ENCODE measurements at regions of chr14 and their contacts with region 1.

Region 1: DNA sequence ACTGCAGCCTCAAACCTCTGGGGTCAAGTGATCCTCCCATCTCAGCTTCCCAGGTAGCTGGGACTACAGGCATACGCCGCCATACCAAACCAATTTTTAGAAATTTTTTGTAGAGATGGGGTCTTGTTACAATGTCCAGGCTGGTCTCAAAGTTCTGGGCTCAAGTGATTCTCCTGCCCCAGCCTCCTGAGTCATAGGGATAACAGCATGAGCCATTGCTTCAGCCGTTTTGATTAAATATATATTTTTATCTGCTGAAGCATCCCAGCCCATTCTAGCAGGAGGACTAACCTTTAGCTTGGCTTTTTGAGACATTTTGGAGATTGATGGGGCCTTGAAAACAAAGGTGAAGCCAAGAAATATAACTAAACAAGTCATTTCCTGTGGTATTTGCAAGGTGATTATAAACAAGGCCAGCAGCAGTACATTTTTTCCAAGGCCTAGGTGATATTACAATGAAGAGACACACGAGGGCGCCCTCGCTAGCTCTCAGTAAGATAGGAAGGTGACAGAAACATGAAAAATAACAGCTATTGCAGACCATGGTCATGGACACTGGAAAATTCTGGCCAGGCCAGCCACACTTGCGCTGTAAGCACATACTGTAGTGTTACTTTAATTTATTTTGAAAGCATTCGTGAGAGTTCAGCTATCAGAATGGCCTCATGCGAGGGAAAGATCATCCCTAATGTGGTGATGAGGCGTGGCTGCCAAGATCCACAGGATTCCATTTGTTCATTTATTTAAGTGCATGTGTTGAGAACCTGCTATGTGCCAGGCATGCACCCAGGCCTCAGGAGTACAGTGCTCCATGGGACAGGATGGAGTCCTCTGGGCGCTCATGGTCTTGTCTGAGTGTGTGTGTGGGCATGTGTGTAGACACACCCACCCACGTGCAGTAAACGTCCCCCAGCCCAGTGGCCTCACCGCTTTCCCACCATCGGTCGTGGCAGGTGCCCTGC is 63.5 kb downstream of the DGLUCY start:
- DNase-seq: peak; percentile 80
- H3K4me3 Mint-ChIP-seq: no peak overlapping the region
- H3K27ac Mint-ChIP-seq: no peak overlapping the region
- H3K4me1 Mint-ChIP-seq: no peaks in the 10 kb centered on the region
- H3K27me3 Mint-ChIP-seq: no peaks in the 10 kb centered on the region
- CTCF ChIP-seq: peak; percentile 86

Region 2: GRCh38 chr14:90912671-90913070 is 264.7 kb before region 1 on chr14:
- CTCF ChIA-PET with region 1: interaction called, 31 read pairs
- POLR2A ChIA-PET with region 1: no interaction called
- intact Hi-C with region 1: no loop called
- DNase-seq: no peak
- H3K4me3 Mint-ChIP-seq: no peak overlapping the region
- H3K27ac Mint-ChIP-seq: no peak overlapping the region
- H3K4me1 Mint-ChIP-seq: peaks cover 6% of the 10 kb centered on the region
- H3K27me3 Mint-ChIP-seq: no peaks in the 10 kb centered on the region
- CTCF ChIP-seq: no peak

Region 3: GRCh38 chr14:91060351-91061055 is 116.9 kb before region 1 on chr14 and contains the start of gene RPS6KA5:
- CTCF ChIA-PET with region 1: interaction called, 27 read pairs
- POLR2A ChIA-PET with region 1: interaction called, 10 read pairs
- intact Hi-C with region 1: loop called (anchors 1 kb)
- DNase-seq: peak; percentile 100
- H3K4me3 Mint-ChIP-seq: no peak within 1 kb of the TSS
- H3K27ac Mint-ChIP-seq: no peak within 1 kb of the TSS
- H3K4me1 Mint-ChIP-seq: peaks cover 10% of the 10 kb centered on the region
- H3K27me3 Mint-ChIP-seq: no peaks in the 10 kb centered on the region
- CTCF ChIP-seq: no peak
- total RNA-seq, gene RPS6KA5: 1.3 and 2.2 TPM in 2 replicates

Region 4: DNA sequence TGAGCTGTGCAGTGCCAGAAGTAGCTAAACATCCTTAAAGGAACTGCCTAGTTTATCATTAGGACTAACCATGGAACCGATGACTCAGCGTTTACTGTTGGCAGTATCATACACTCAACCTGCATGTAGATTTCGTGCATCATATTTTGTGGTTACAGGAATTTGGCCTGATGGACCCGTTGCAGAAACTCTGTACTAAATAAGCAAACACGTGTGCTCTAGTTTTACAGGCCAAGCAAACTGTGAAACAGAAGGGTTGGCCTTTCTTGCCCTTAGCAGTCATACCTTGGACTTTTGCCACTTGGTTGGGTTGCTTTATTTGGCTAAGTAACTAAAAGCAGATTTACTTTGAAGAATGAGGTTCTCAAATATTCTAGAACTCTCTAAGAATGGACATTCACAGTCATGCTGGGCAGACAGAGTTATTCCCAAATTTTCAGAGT is 27.9 kb before region 1 on chr14:
- CTCF ChIA-PET with region 1: interaction called, 11 read pairs
- POLR2A ChIA-PET with region 1: no interaction called
- intact Hi-C with region 1: no loop called
- DNase-seq: peak; percentile 98
- H3K4me3 Mint-ChIP-seq: no peak overlapping the region
- H3K27ac Mint-ChIP-seq: no peak overlapping the region
- H3K4me1 Mint-ChIP-seq: peaks cover 16% of the 10 kb centered on the region
- H3K27me3 Mint-ChIP-seq: no peaks in the 10 kb centered on the region
- CTCF ChIP-seq: no peak

Region 5: GRCh38 chr14:91164685-91165084 is 12.7 kb before region 1 on chr14:
- CTCF ChIA-PET with region 1: interaction called, 29 read pairs
- POLR2A ChIA-PET with region 1: interaction called, 4 read pairs
- intact Hi-C with region 1: no loop called
- DNase-seq: peak; percentile 70
- H3K4me3 Mint-ChIP-seq: no peak overlapping the region
- H3K27ac Mint-ChIP-seq: peak overlapping the region; percentile 64
- H3K4me1 Mint-ChIP-seq: peaks cover 12% of the 10 kb centered on the region
- H3K27me3 Mint-ChIP-seq: no peaks in the 10 kb centered on the region
- CTCF ChIP-seq: no peak

Region 6: GRCh38 chr14:91237219-91237618 is 59.9 kb after region 1 on chr14:
- CTCF ChIA-PET with region 1: no interaction called
- POLR2A ChIA-PET with region 1: no interaction called
- intact Hi-C with region 1: no loop called
- DNase-seq: no peak
- H3K4me3 Mint-ChIP-seq: no peak overlapping the region
- H3K27ac Mint-ChIP-seq: no peak overlapping the region
- H3K4me1 Mint-ChIP-seq: no peaks in the 10 kb centered on the region
- H3K27me3 Mint-ChIP-seq: no peaks in the 10 kb centered on the region
- CTCF ChIP-seq: no peak

Region 7: GRCh38 chr14:91281346-91281745 is 104.0 kb after region 1 on chr14:
- CTCF ChIA-PET with region 1: interaction called, 195 read pairs
- POLR2A ChIA-PET with region 1: interaction called, 3 read pairs
- intact Hi-C with region 1: loop called (anchors 1 kb)
- DNase-seq: peak; percentile 66
- H3K4me3 Mint-ChIP-seq: no peak overlapping the region
- H3K27ac Mint-ChIP-seq: no peak overlapping the region
- H3K4me1 Mint-ChIP-seq: peaks cover 26% of the 10 kb centered on the region
- H3K27me3 Mint-ChIP-seq: no peaks in the 10 kb centered on the region
- CTCF ChIP-seq: no peak

Region 8: DNA sequence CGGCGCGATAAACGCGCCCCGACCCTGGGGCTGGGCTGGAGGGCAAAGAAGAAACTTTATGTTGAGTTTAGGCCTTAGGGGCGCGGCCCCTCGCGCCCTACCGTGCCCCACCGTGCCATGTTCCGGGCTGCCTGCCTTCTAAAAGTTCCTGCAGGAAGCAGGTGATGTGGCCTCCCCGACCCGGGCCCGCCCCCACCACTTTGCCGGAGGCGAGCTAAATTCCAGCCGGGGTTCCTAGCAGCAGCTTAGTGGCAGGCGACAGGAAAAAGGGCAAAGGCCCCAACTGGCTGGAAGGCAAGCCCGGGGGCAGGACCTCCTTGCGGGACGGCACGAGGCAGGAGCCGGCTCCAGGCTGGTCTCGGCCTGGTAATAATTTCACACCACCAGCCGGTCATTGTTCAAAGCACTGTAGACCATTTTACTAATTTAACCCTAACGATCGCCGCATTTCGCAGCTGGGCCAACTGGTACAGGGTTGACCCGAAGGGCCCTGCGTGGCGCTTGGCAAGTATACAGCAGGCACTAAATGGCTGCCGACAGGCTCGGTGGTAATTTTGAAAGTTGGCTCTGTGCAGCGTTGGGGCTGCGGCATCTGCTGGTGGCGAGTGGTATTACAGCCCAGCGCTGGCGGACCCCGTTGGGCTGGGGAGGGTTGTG is 241.2 kb after region 1 on chr14:
- CTCF ChIA-PET with region 1: interaction called, 3 read pairs
- POLR2A ChIA-PET with region 1: interaction called, 5 read pairs
- intact Hi-C with region 1: loop called (anchors 2 kb)
- DNase-seq: peak; percentile 71
- H3K4me3 Mint-ChIP-seq: peak overlapping the region; percentile 71
- H3K27ac Mint-ChIP-seq: no peak overlapping the region
- H3K4me1 Mint-ChIP-seq: peaks cover 24% of the 10 kb centered on the region
- H3K27me3 Mint-ChIP-seq: no peaks in the 10 kb centered on the region
- CTCF ChIP-seq: peak; percentile 97

Measured in MCF 10A (cell line).